Activated T-helper 2 cell treated with anti-CD3 and anti-CD28 coated beads, Interferon-gamma antibody, Interleukin-2, Interleukin-4, amounts not matched to agents 10 μg/mL and 5 μg/mL and 100 μg/mL, durations not matched to agents 14 hours and 24 hours and 36 hours (primary cell): ENCODE measurements at regions of chr22 and their contacts with region 1.

Region 1: DNA sequence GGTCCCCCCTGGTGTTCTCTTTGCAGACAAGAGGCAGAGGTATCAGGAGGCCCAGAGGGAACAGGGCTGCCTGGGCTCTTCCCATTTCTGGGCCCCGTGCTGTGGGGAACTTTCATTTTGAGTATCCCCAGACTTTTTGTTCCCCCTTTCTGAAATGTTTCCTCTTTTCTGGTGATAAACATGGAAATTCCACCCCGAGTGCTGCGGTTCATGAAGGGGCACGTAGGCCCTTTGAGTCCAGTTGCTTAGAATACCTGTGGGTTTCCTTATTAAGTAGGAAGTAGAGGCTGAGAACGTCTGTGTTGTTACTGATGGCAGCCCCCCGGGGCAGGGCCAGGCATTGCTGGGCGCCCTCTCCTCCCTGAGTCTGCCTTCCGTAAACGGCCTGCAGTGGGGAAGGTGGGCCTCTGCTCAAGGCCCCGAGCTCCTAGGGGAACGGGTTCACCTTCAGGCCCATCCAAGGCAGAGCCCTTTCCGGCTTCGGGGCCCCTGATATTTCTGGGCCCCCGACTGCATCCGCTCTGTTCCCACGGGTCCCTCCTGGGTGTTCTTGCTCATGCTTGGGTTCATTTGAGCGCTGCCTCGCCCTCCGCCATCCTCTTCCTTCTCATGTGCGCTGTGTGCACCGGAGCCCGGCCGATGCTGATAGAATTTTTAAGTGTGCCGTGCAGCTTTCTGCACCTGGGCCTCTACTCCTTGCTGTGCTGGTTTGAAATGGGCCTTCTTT is 12.0 kb downstream of the TBC1D22A start:
- DNase-seq: no peak
- H3K4me3 Mint-ChIP-seq: peak overlapping the region; percentile 46
- H3K27ac Mint-ChIP-seq: peak overlapping the region; percentile 86
- H3K4me1 Mint-ChIP-seq: peaks cover 53% of the 10 kb centered on the region
- H3K27me3 Mint-ChIP-seq: no peaks in the 10 kb centered on the region

Region 2: DNA sequence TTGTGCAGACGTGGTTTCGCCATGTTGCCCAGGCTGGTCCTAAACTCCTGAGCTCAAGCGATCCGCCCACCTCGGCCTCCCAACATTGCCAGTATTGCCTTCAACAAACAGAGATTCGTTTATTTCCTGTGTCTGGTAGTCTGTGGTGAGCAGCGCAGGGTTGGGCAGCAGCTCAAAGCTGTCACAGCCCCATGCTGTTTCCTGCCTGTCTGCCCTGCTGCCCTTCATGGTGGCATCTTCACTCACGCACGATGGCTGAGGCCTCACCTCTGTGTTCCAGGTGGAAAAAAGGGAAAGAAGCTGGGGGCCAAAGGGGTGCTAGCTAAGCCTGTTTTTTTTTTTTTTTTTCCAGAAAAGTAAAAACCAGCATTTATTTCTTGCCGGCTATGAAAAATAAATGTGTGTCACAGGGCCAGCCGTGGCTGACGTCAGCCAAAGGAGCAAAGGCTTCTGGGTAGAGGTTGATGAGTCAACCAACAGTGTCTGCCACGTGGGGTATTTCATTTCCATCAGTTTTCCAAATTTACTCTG is 16.9 kb after region 1 on chr22:
- intact Hi-C with region 1: loop called (anchors 2 kb)
- DNase-seq: peak; percentile 72
- H3K4me3 Mint-ChIP-seq: peak overlapping the region; percentile 75
- H3K27ac Mint-ChIP-seq: peak overlapping the region; percentile 100
- H3K4me1 Mint-ChIP-seq: peaks cover 39% of the 10 kb centered on the region
- H3K27me3 Mint-ChIP-seq: no peaks in the 10 kb centered on the region